ENCODE measurements at regions of chr20 and their contacts with region 1.

Region 1: DNA sequence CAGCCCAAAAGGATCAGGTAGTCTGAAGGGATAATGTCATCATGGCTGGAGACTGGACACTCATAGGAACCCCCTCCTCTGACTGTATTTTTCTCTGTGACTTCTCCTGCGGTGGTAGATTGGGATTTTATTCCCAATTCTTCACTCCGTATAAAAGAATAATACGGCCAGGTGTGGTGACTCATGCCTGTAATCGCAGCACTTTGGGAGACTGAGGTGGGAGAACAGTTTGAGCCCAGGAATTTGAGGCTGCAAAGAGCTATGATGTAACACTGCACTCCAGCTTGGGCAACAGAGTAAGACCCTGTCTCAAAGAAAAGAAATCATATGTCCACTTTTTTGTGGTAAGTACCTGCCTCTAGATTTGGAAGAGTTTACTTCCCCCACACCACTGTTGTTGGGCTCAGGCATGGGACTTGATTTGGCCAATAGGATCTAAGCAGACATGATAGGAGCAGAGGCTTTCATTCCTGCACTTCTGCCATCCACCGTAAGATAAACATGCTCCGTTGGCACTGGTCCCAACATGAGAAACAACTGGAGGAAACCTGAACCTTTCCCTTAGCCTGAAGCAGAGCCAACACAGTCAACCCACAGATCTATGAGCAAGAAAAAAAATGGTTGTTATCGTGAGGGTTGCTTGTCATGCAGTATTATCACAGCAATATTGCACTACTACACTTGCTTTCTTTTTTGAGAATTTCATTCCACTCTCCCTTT is 82.0 kb downstream of the JPH2 start:
- DNase-seq: no peak
- ATAC-seq: peak; percentile 58; the same call in 1 of the 2 replicates
- H3K4me3 ChIP-seq: no peak overlapping the region
- H3K27ac ChIP-seq: no peak overlapping the region
- H3K4me1 ChIP-seq: peaks cover 3 to 6% of the 10 kb centered on the region in 2 experiments; a peak in 2 of 4 replicates
- H3K27me3 ChIP-seq: peaks cover 5% of the 10 kb centered on the region; the same call in 1 of the 2 replicates
- CTCF ChIP-seq: no peak
- POLR2A ChIP-seq: no peak
- RAD21 ChIP-seq: no peak

Region 2: GRCh38 chr20:43955062-43955749 is 149.8 kb before region 1 on chr20:
- CTCF ChIA-PET with region 1: no interaction called
- POLR2A ChIA-PET with region 1: no interaction called
- RAD21 ChIA-PET with region 1: no interaction called
- intact Hi-C with region 1: no loop called
- DNase-seq: peak; percentile 87
- ATAC-seq: peak; percentile 87
- H3K4me3 ChIP-seq: peak overlapping the region in 1 of 2 experiments; percentile 15; a peak in 2 of 4 replicates
- H3K27ac ChIP-seq: peak overlapping the region; percentile 88
- H3K4me1 ChIP-seq: peaks cover 77 to 82% of the 10 kb centered on the region in 2 experiments
- H3K27me3 ChIP-seq: no peaks in the 10 kb centered on the region
- CTCF ChIP-seq: no peak
- POLR2A ChIP-seq: no peak
- RAD21 ChIP-seq: peak; percentile 36

Region 3: DNA sequence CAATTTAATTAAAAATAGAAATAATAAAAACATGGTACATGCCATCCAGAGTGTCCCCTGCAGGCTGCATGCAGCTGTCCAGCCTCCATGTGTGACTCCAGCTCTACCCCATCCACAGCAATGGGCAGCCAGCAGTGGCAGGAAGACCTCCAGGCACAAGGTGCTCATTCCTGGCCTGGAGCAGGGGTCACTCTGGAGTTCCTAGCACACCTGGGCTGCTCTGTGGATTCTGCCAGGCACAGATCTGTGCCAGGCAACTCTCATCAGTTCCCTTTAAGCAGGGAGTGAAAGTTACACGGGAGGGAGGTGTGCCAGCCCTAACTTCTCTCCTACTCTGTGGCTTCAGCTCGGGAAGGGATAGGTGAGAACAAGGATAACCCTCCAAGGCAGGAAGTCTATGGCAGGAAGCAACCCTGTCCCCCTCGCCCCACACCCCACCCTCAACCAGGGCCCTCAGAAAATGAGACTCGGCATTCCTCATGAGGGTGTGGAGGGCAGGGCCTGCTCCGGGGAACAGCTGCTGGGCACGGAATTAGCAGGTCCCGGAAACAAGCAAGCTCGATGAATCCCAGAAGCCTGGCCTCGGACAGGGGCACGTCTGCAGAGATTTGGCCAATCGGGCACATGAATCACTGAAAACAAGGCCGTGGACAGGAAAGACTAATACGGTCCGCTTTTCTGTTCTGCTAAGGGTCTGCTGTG is 72.0 kb after region 1 on chr20:
- CTCF ChIA-PET with region 1: no interaction called
- POLR2A ChIA-PET with region 1: no interaction called
- RAD21 ChIA-PET with region 1: no interaction called
- intact Hi-C with region 1: loop called (anchors 5 kb)
- DNase-seq: no peak
- ATAC-seq: no peak
- H3K4me3 ChIP-seq: no peak overlapping the region
- H3K27ac ChIP-seq: no peak overlapping the region
- H3K4me1 ChIP-seq: no peaks in the 10 kb centered on the region
- H3K27me3 ChIP-seq: no peaks in the 10 kb centered on the region
- CTCF ChIP-seq: no peak
- POLR2A ChIP-seq: no peak
- RAD21 ChIP-seq: no peak

Measured in HCT116 (cell line).